Esophagus muscularis mucosa (tissue), 4 donors: ENCODE measurements at regions of chr4 and their contacts with region 1.

Region 1: GRCh38 chr4:38663801-38664705 is at the start of gene KLF3:
- DNase-seq: peak; percentile 98
- H3K4me3 ChIP-seq: peak within 1 kb of the TSS; percentile 94 to 99 (median 96)
- H3K27ac ChIP-seq: peak within 1 kb of the TSS; percentile 99 to 100 (median 100)
- H3K4me1 ChIP-seq: peaks cover 41 to 54% (median 49%) of the 10 kb centered on the region in 4 donors
- H3K27me3 ChIP-seq: no peaks in the 10 kb centered on the region
- CTCF ChIP-seq: no peak
- EP300 ChIP-seq: no peak
- POLR2A ChIP-seq: peak; percentile 86
- total RNA-seq, gene KLF3: 30.8 to 50.4 (median 40.4) TPM

Region 2: GRCh38 chr4:38591617-38592337 is 72.3 kb before region 1 on chr4:
- intact Hi-C with region 1: loop called (anchors 5 kb)
- DNase-seq: no peak
- H3K4me3 ChIP-seq: no peak overlapping the region
- H3K27ac ChIP-seq: peak overlapping the region; percentile 65 to 77 (median 71)
- H3K4me1 ChIP-seq: peaks cover 0 to 25% (median 18%) of the 10 kb centered on the region in 4 donors
- H3K27me3 ChIP-seq: no peaks in the 10 kb centered on the region
- CTCF ChIP-seq: no peak
- EP300 ChIP-seq: peak; percentile 36
- POLR2A ChIP-seq: no peak

Region 3: GRCh38 chr4:38730830-38731646 is 67.0 kb after region 1 on chr4:
- intact Hi-C with region 1: no loop called
- DNase-seq: no peak
- H3K4me3 ChIP-seq: no peak overlapping the region
- H3K27ac ChIP-seq: no peak overlapping the region
- H3K4me1 ChIP-seq: peaks cover 7 to 10% (median 9%) of the 10 kb centered on the region in 4 donors
- H3K27me3 ChIP-seq: no peaks in the 10 kb centered on the region
- CTCF ChIP-seq: peak; percentile 91 to 97 (median 95)
- EP300 ChIP-seq: no peak
- POLR2A ChIP-seq: no peak